ENCODE measurements at regions of chr13 and their contacts with region 1.

Region 1: GRCh38 chr13:94601446-94602431 is at the start of gene GPR180:
- DNase-seq: peak; percentile 75
- H3K4me3 ChIP-seq: peak within 1 kb of the TSS; percentile 93 to 99 (median 96)
- H3K27ac ChIP-seq: peak within 1 kb of the TSS; percentile 85 to 92 (median 90)
- H3K4me1 ChIP-seq: peaks cover 0 to 26% (median 3%) of the 10 kb centered on the region in 3 donors
- H3K27me3 ChIP-seq: no peaks in the 10 kb centered on the region
- CTCF ChIP-seq: peak in 1 of 6 experiments; percentile 10
- POLR2A ChIP-seq: peak in 2 of 4 donors; percentile 59 to 87
- total RNA-seq, gene GPR180: 2.6 to 5.3 (median 3.6) TPM

Region 2: DNA sequence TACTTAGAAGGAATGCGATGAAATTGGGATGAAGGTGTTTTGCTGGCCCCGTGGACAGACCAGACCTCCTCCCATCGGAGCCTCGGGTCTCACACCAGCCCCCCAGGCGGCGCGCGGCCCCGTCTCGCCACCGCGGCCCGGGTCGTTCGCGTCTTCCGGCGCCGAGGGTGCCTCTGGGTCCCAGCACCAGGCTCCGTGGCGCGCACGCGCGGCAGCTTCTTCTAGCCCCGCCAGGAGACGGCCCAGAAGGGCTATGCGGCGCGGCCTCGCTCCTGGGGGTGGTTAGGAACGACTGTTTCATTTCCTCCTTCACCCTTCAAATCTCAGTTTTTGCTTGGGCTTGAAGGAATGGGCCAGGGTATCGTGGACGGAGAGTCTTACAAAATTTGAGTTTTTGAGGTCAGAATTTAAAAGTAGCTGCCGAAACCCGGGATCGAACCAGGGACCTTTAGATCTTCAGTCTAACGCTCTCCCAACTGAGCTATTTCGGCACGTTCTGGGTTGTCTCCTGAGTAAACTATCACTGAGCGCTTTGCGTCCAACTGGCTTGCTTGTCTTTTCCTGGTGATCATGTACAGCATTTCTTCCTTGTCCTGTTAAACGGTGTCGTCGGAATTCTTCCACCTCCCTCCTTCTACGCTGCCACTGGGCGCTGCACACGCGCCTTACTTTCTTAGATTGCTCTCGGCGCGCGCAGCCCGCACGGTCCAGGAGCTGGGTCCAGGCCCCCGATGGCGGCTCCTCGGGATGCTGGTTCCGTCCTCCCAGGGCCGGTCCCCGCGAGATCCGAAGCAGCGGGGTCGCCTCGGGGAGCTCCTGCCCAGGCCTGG is 52.3 kb before region 1 on chr13:
- intact Hi-C with region 1: loop called (anchors 5 kb)
- DNase-seq: peak; percentile 50
- H3K4me3 ChIP-seq: peak overlapping the region; percentile 69 to 85 (median 73)
- H3K27ac ChIP-seq: peak overlapping the region; percentile 92 to 98 (median 96)
- H3K4me1 ChIP-seq: peaks cover 0 to 25% (median 13%) of the 10 kb centered on the region in 3 donors
- H3K27me3 ChIP-seq: no peaks in the 10 kb centered on the region
- CTCF ChIP-seq: peak in 1 of 6 experiments; percentile 9
- POLR2A ChIP-seq: peak in 2 of 4 donors; percentile 28 to 45

Region 3: GRCh38 chr13:95207769-95208366 is 606.1 kb after region 1 on chr13:
- intact Hi-C with region 1: no loop called
- DNase-seq: no peak
- H3K4me3 ChIP-seq: no peak overlapping the region
- H3K27ac ChIP-seq: no peak overlapping the region
- H3K4me1 ChIP-seq: no peaks in the 10 kb centered on the region
- H3K27me3 ChIP-seq: no peaks in the 10 kb centered on the region
- CTCF ChIP-seq: no peak
- POLR2A ChIP-seq: no peak